Activated CD4-positive, alpha-beta T cell treated with anti-CD3 and anti-CD28 coated beads for 36 hours (primary cell): ENCODE measurements at regions of chr9 and their contacts with region 1.

Region 1: DNA sequence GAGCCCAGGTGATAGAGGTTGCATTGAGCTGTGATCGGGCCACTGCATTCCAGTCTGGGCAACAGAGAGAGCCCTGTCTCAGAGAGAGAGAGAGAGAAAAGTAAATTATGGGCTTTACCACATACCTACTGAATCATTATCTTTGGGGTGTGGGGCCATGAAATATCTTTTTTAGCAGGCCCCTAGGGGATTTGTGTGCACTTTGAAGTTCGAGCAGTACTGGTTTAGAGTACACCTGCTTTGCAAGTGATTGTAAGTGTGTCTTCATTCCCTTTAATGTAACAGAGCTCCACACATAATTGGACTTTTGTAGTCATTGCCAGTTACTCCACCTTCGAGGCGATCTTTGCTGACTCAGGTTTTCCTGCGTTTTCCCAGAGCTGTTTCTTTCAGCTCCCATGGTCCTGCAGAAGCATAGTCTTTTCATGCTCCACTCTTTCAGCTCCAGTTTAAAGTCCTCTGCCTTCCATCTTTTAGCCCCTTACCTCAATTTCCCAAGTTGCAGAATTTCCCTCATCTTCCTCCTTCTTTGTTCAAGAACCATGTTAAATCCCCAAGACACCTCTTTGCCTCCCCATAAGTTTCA is 24.0 kb upstream of the FRMPD1 start:
- DNase-seq: no peak
- ATAC-seq: no peak
- H3K4me3 Mint-ChIP-seq: no peak overlapping the region
- H3K27ac Mint-ChIP-seq: no peak overlapping the region
- H3K4me1 Mint-ChIP-seq: no peaks in the 10 kb centered on the region
- H3K27me3 Mint-ChIP-seq: peaks cover 2% of the 10 kb centered on the region

Region 2: GRCh38 chr9:37660691-37661090 is 33.9 kb after region 1 on chr9:
- CTCF ChIA-PET with region 1: interaction called, 3 read pairs
- POLR2A ChIA-PET with region 1: no interaction called
- intact Hi-C with region 1: loop called in 1 of 2 experiments (anchors 5 kb)
- DNase-seq: no peak
- ATAC-seq: no peak
- H3K4me3 Mint-ChIP-seq: no peak overlapping the region
- H3K27ac Mint-ChIP-seq: no peak overlapping the region
- H3K4me1 Mint-ChIP-seq: no peaks in the 10 kb centered on the region
- H3K27me3 Mint-ChIP-seq: peaks cover 9% of the 10 kb centered on the region